Activated naive CD4-positive, alpha-beta T cell treated with anti-CD3 and anti-CD28 coated beads for 36 hours (primary cell): ENCODE measurements at regions of chr1 and their contacts with region 1.

Region 1: GRCh38 chr1:230978491-230979388 is at the starts of genes ARV1 and TTC13:
- DNase-seq: peak; percentile 97
- H3K4me3 Mint-ChIP-seq: peak within 1 kb of the TSS; percentile 95
- H3K27ac Mint-ChIP-seq: peak within 1 kb of the TSS; percentile 92
- H3K4me1 Mint-ChIP-seq: peaks cover 30% of the 10 kb centered on the region
- H3K27me3 Mint-ChIP-seq: no peaks in the 10 kb centered on the region
- total RNA-seq, gene ARV1: 14.9 to 17.7 TPM
- total RNA-seq, gene TTC13: 10.9 to 13.2 TPM

Region 2: DNA sequence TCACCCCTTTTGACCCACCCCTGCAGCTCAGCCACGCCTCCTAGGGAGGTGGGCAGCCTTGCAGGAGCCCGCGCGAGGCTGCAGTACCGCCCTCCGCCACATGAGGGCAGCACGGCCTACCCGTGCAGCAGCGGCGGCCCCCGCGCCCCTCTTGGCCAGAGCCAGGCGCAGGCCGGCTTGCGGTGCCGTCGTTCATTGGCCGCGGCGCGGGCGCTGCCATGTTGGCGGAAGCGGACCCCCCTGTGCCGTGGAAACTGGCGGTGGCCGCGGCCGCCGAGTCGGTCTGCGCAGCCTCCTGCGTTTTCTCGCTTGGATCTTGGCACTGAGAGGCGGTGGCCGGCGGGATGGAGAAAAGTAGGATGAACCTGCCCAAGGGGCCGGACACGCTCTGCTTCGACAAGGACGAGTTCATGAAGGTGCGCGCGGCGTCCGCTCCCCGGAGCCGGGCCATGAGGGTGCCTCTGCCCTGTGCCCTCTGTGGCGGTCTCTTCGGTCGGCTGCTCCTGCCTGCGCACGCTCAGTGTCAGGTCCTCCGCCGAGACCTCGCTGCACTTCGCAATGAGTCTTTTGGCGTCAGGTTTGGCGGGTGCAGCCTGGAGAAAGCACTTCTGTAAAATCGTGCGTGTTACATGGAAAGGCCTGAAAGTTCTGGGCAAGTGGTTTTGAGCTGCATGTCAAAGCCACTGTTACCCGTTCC is 336.3 kb before region 1 on chr1 and contains the start of gene COG2:
- CTCF ChIA-PET with region 1: no interaction called
- intact Hi-C with region 1: loop called (anchors 1 kb)
- DNase-seq: peak; percentile 95
- H3K4me3 Mint-ChIP-seq: peak within 1 kb of the TSS; percentile 94
- H3K27ac Mint-ChIP-seq: peak within 1 kb of the TSS; percentile 75
- H3K4me1 Mint-ChIP-seq: peaks cover 39% of the 10 kb centered on the region
- H3K27me3 Mint-ChIP-seq: peaks cover 11% of the 10 kb centered on the region
- total RNA-seq, gene COG2: 19.9 to 22.1 TPM

Region 3: DNA sequence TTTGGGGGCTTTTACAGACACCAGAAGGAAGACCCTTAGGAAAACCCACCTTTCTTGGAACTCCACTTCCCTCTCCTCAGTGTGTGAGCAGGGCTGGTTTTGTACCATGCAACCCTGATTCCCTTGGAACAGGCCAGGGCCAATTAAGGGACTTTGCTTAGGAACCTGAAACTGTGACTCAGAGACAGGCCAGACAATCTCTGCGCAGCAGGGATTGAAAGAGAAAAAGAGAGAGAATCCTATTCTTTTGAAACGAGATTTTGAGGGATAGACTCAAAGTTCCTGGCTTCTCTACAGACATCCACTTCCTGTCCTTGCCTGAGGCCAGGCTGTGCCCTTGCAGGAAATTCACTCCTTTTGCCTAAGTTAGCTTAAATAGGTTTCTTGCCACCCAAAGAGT is 87.3 kb before region 1 on chr1:
- CTCF ChIA-PET with region 1: no interaction called
- intact Hi-C with region 1: no loop called
- DNase-seq: no peak
- H3K4me3 Mint-ChIP-seq: no peak overlapping the region
- H3K27ac Mint-ChIP-seq: no peak overlapping the region
- H3K4me1 Mint-ChIP-seq: no peaks in the 10 kb centered on the region
- H3K27me3 Mint-ChIP-seq: peaks cover 4% of the 10 kb centered on the region

Region 4: DNA sequence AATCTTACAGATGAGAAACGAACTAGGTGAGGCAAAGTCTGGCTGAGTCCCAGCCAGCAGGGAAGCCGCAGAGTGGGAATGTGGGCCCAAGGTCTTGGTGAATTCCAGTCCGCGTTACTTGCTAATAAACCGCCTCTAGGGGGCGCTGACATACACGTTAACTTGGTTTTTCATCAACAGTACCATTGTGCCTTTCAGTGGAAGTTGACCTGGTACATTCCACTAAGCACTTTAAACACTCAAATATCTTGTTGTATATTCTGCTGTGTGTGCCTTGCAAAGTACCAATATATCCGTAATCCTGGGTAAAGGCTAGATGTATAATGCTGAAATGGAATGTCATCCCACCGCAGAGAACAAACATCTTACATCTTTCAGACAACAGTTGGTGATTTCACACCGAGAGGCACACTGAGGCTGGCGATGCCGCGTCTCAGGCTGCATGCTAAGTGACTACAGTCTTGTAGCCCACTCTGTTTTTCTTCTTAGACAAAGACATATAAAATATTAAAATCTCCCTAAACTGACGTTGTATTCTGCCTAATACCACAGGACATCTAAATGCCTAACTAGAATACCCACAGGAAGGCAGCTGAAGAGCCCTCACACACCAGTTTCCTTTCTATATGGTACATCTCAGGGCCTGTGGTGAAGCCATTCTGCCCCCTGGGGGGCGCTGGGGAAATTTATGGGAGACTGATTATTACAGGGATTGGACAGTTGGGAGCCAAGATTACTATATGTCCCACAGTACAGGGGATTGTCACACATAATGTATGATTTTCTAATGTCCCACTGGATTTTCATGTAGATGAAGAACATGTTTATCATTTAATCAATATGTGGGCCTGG is 61.2 kb before region 1 on chr1:
- CTCF ChIA-PET with region 1: interaction called, 5 read pairs
- intact Hi-C with region 1: loop called (anchors 1 kb)
- DNase-seq: peak; percentile 86
- H3K4me3 Mint-ChIP-seq: no peak overlapping the region
- H3K27ac Mint-ChIP-seq: no peak overlapping the region
- H3K4me1 Mint-ChIP-seq: peaks cover 5% of the 10 kb centered on the region
- H3K27me3 Mint-ChIP-seq: no peaks in the 10 kb centered on the region

Region 5: GRCh38 chr1:231028682-231029081 is 49.9 kb after region 1 on chr1:
- CTCF ChIA-PET with region 1: no interaction called
- intact Hi-C with region 1: no loop called
- DNase-seq: no peak
- H3K4me3 Mint-ChIP-seq: no peak overlapping the region
- H3K27ac Mint-ChIP-seq: no peak overlapping the region
- H3K4me1 Mint-ChIP-seq: peaks cover 11% of the 10 kb centered on the region
- H3K27me3 Mint-ChIP-seq: no peaks in the 10 kb centered on the region

Region 6: DNA sequence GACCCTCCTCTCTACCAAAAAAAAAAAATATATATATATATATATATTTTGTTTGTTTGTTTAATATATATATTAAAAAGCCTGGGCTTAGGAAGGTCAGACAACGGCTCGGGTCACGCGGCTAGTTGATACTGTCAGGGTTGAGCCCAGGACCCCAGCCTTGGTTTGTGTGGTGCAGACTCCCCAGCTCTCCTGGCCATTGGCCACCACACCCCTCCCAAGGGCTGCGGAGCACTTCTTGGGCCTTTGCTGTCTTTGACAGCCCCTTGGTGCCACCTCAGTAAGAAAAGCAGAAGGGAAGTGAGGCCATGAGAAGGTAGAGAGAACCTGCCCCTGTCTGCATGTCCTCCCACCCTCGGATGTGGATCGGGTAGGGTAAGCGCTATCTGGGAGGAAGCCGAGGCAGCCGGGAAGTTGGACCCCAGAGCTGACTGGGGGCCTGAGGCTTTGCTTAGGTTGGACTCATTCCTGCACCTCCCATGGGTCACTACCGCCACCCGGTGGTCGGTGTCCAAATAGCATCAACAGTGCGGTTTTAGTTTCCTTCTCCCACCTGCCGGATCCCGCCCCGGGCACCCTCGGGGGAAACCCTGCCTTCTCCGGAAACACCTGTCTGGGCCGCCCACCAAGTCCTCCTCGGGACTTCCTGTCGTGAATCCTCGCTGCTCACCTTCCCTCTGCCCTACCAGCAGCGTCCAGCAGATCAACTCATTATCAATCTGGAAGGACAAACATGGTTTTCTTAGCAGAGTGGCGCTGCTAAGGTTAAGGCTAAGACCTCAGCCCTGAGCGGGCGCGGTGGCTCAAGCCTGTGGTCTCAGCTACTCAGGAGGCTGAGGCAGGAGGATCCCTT is 232.5 kb after region 1 on chr1:
- CTCF ChIA-PET with region 1: no interaction called
- intact Hi-C with region 1: loop called (anchors 1 kb)
- DNase-seq: peak; percentile 98
- H3K4me3 Mint-ChIP-seq: peak overlapping the region; percentile 77
- H3K27ac Mint-ChIP-seq: no peak overlapping the region
- H3K4me1 Mint-ChIP-seq: peaks cover 7% of the 10 kb centered on the region
- H3K27me3 Mint-ChIP-seq: no peaks in the 10 kb centered on the region

Region 7: GRCh38 chr1:231337472-231338269 is 358.9 kb after region 1 on chr1 and contains the start of gene EXOC8:
- CTCF ChIA-PET with region 1: no interaction called
- intact Hi-C with region 1: loop called (anchors 2 kb)
- DNase-seq: peak; percentile 97
- H3K4me3 Mint-ChIP-seq: peak within 1 kb of the TSS; percentile 100
- H3K27ac Mint-ChIP-seq: peak within 1 kb of the TSS; percentile 97
- H3K4me1 Mint-ChIP-seq: peaks cover 53% of the 10 kb centered on the region
- H3K27me3 Mint-ChIP-seq: no peaks in the 10 kb centered on the region
- total RNA-seq, gene EXOC8: 11.5 to 12.0 TPM

Region 8: GRCh38 chr1:231626535-231626945 is 647.8 kb after region 1 on chr1 and contains the start of gene DISC1:
- CTCF ChIA-PET with region 1: no interaction called
- intact Hi-C with region 1: loop called (anchors 5 kb)
- DNase-seq: peak; percentile 76
- H3K4me3 Mint-ChIP-seq: peak within 1 kb of the TSS; percentile 82
- H3K27ac Mint-ChIP-seq: peak within 1 kb of the TSS; percentile 78
- H3K4me1 Mint-ChIP-seq: peaks cover 28% of the 10 kb centered on the region
- H3K27me3 Mint-ChIP-seq: no peaks in the 10 kb centered on the region
- total RNA-seq, gene DISC1: 4.8 to 5.0 TPM